ENCODE measurements at regions of chr9 and their contacts with region 1.

Region 1: DNA sequence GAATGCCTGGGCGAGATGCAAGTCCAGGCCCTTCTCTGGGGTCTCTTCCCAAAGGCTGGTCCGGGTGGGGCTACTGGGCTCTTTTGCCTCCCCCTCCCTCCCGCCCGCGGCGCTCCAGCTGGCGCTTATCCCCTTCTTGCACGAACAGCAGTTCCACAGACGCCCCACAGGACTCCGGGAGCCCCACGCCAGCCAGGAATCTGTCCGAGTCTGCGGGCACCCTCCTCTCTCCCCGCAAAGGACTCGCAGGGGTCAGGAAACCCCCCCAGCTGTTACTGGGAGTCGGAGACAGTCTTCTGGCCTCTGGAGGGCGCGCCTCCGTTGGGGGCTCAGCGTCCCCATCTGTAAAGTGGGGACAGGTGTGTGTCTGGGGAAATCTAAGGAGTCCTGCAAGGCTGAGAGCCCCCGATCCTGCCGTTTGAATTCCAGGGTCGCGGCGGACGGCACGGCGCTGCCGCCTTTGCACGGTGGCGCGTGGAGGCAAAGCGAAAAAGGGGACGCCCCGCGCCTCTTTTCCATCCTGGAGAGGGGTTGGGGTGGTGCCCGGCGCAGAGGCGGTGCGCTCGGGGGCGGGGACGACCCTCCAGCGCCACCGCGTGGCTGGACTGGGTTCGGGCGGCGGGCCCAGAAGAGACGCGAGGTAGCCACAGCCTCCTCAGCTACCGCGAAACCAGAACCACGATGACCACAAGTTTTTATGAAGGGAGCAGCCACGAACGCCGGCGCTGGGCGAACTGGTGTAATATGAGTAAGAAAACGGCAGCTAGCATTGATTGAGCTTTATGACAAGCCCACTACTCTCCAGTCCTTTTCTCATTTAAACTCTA is 2.9 kb upstream of the CCIN start:
- DNase-seq: peak; percentile 96

Region 2: GRCh38 chr9:36036780-36037548 is 129.3 kb before region 1 on chr9 and contains the start of gene RECK:
- intact Hi-C with region 1: loop called in 1 of 2 experiments (anchors 10 kb)
- DNase-seq: peak; percentile 96
- total RNA-seq, gene RECK: 20.1 to 30.3 TPM

Region 3: DNA sequence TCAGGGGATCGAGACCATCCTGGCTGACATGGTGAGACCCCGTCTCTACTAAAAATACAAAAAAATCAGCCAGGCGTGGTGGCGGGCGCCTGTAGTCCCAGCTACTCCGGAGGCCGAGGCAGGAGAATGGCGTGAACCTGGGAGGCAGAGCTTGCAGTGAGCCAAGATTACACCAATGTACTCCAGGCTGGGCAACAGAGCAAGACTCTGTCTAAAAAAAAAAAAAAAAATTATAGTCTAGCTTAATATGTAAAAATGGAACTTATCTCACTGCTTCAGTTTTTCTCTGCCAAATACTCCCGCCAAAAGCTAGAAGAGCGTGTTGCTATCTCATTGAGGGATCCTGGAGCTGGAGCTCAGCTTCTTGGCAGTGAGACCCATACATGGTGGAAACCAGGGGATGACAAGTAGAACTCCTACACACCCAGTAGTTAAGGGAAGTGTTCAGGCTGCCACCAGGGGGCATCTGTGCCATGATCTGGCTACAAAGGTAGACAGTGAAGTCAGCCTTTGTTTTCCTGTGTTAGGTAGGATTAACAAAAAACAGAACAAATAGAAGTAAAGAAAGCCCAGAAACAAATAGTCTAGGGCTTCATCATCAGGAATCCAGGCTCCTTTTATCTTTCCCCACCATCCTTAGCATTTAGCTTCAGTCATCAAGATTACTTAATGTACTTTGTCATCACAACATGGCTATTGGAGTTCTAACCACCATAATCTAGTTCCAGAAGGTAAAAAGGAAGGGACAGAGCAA is 63.4 kb before region 1 on chr9:
- intact Hi-C with region 1: loop called in 1 of 2 experiments (anchors 2 kb)
- DNase-seq: peak; percentile 94

Region 4: GRCh38 chr9:36802191-36802920 is 636.0 kb after region 1 on chr9:
- intact Hi-C with region 1: no loop called
- DNase-seq: no peak

Region 5: DNA sequence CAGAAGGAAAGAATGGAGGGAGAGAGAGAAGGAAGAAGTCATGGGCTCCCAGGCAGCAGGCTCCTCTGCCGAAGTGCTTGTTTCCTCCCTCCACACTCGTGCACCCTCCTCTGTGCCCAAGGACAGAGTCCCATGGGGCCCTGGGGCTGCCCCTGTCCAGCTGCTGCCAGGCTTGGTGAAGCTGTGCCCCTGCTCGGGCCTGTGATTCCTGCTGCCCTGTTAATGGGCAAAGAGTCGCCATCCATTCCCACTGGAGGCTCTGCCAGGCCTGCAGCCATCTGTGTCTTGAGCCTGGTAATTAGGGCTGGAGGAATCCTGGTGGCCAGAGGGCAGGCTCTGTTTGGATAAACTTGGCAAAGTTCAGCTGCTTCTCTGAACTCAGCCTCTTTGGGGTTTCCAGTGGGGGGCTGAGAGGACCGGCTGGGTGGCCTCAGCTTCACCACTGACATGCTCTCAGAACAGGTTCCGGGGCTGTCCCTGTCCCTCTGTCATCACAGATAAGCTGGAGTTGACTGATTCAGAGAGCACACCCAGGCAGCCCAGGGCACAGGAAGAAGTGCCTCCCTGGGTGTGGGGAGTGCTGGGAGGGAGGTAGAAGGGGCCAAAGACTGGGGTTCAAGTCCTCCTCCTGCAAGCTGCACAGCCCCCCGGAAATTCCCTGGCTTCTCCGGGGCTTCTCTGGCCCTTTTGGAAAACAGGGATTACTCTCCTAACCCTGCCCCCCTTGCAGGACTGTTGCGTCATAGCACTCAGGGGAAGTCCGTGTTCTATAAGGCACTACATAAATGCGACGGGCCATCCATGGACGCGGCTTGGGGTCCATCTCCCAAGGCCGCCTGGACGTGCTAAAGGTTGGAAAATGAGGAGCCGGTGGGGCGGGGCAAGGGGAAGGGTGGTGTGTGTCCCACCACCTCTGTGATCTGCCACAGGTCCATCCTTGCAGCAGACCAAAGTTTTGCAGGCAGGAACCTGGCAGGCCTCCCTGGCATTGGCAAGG is 713.0 kb after region 1 on chr9:
- intact Hi-C with region 1: no loop called
- DNase-seq: peak; percentile 53

Measured in posterior vena cava (tissue), 2 donors.